ENCODE measurements at regions of chr17 and their contacts with region 1.

Region 1: DNA sequence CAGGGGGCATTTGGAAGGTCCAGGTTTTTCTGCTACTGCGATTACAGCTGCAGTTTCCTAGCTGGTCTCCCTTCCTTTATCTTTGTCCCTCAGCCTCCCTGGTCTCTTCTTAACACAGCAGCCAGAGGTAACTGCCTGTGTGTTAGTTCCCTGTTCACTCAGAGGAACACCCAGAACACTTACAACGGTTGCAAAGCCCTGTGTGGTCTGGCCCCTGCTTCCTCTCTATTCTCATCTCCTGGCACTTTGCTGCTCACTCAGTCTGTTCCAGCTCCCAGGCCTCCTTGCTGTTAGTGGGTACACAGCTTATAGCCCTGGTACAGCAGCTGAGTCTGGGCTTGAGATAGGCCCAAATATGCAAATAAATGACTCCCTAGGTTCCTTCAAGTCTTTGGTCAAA is 16.4 kb downstream of the NTN1 start:
- DNase-seq: no peak
- H3K4me3 ChIP-seq: no peak overlapping the region
- H3K27ac ChIP-seq: no peak overlapping the region
- H3K4me1 ChIP-seq: no peaks in the 10 kb centered on the region
- H3K27me3 ChIP-seq: no peaks in the 10 kb centered on the region
- CTCF ChIP-seq: no peak

Region 2: DNA sequence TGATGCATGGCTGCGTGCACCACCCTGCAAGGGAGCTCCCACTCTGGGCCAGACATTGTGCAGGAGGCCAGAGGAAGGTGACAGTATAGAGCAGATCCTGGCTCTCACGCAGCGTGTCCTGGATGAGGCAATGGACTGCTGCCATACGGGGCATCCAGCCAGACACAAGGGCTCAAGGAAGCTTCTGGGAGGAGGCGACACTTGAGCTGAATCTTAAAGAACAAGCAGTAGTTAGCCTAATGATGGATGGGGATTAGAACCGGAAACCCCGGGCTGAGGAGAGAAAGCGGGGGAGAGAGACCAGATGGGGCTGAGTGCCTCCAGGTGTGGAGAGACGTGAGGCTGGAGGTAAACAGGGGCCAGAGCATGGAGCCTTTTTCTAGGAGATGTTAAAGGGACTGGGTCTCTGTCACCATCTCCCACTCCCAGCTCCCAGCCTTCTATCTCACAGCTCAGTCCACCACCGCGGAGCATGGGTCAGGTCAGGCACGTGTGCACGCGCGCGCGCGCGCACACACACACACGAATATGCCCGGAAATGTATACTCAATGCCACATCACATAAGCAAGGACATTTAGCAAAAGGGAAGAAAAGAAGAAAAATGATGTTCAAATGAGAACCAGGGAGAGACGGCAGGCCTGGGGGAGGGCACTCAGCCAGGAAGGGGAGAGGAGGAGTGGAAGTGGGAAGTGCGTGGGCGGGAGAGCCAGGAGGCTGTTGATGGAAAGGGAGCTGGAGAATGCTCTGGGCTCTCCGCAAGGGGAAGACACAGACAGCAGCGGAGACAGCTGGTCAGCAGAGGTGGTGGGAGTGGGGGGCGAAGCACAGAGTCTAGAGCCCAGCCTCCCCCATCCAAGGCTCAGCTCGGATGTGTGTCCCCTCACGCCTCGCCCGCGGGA is 339.3 kb before region 1 on chr17:
- intact Hi-C with region 1: no loop called
- DNase-seq: peak; percentile 32
- H3K4me3 ChIP-seq: no peak overlapping the region
- H3K27ac ChIP-seq: no peak overlapping the region
- H3K4me1 ChIP-seq: no peaks in the 10 kb centered on the region
- H3K27me3 ChIP-seq: no peaks in the 10 kb centered on the region
- CTCF ChIP-seq: no peak

Region 3: GRCh38 chr17:8986290-8986689 is 51.4 kb before region 1 on chr17:
- intact Hi-C with region 1: loop called (anchors 5 kb)
- DNase-seq: no peak
- H3K4me3 ChIP-seq: no peak overlapping the region
- H3K27ac ChIP-seq: no peak overlapping the region
- H3K4me1 ChIP-seq: no peaks in the 10 kb centered on the region
- H3K27me3 ChIP-seq: no peaks in the 10 kb centered on the region
- CTCF ChIP-seq: no peak